ENCODE measurements at regions of chr4 and their contacts with region 1.

Region 1: GRCh38 chr4:140153718-140154571 is at the start of gene MAML3:
- DNase-seq: peak; percentile 98
- H3K4me3 ChIP-seq: peak within 1 kb of the TSS; percentile 71 to 86 (median 76)
- H3K27ac ChIP-seq: peak within 1 kb of the TSS; percentile 96 to 99 (median 98)
- H3K4me1 ChIP-seq: peaks cover 0 to 36% (median 29%) of the 10 kb centered on the region in 4 donors
- H3K27me3 ChIP-seq: no peaks in the 10 kb centered on the region
- CTCF ChIP-seq: no peak
- EP300 ChIP-seq: no peak
- POLR2A ChIP-seq: peak; percentile 61 to 84
- total RNA-seq, gene MAML3: 5.0 to 16.3 (median 7.6) TPM

Region 2: GRCh38 chr4:139301113-139301820 is 852.7 kb before region 1 on chr4 and contains the start of gene NAA15:
- intact Hi-C with region 1: loop called (anchors 10 kb)
- DNase-seq: peak; percentile 99
- H3K4me3 ChIP-seq: peak within 1 kb of the TSS; percentile 87 to 99 (median 96)
- H3K27ac ChIP-seq: peak within 1 kb of the TSS; percentile 93 to 98 (median 96)
- H3K4me1 ChIP-seq: peaks cover 0 to 60% (median 35%) of the 10 kb centered on the region in 4 donors
- H3K27me3 ChIP-seq: no peaks in the 10 kb centered on the region
- CTCF ChIP-seq: no peak
- EP300 ChIP-seq: peak in 1 of 4 donors; percentile 68
- POLR2A ChIP-seq: peak; percentile 87
- total RNA-seq, gene NAA15: 21.6 to 40.3 (median 28.9) TPM

Region 3: DNA sequence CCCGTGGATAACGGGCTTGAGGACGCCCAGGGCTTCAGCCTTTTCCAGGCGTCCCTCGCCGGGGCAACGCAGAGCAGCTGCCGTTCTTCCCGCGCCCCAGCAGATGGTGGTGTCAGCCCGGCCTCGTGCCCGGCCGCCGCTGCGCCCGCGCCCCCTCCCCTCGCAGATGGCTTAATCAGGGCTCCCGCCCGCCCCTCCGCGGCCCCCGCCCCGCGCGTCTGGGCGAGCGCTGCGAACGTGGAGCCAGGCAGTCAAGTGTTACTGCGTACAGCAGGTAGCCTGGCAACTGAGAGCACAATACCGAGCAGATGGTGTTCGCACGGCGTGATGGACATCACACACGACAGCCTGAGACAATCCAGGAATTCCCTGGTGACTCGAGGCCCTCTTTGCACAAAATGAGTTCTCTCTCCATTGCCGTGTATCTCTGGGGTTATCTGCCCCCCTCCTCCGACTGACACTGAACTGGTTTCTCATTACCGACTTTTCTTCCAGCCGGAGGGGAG is 419.0 kb before region 1 on chr4:
- intact Hi-C with region 1: loop called (anchors 2 kb)
- DNase-seq: peak; percentile 95
- H3K4me3 ChIP-seq: peak overlapping the region; percentile 23 to 58 (median 52)
- H3K27ac ChIP-seq: peak overlapping the region; percentile 81 to 90 (median 88)
- H3K4me1 ChIP-seq: peaks cover 0 to 32% (median 23%) of the 10 kb centered on the region in 4 donors
- H3K27me3 ChIP-seq: no peaks in the 10 kb centered on the region
- CTCF ChIP-seq: peak; percentile 55 to 87 (median 63)
- EP300 ChIP-seq: peak in 1 of 4 donors; percentile 31
- POLR2A ChIP-seq: no peak

Region 4: GRCh38 chr4:139919521-139919920 is 234.4 kb before region 1 on chr4:
- intact Hi-C with region 1: loop called (anchors 5 kb)
- DNase-seq: no peak
- H3K4me3 ChIP-seq: no peak overlapping the region
- H3K27ac ChIP-seq: peak overlapping the region; percentile 77 to 90 (median 81)
- H3K4me1 ChIP-seq: peaks cover 0 to 77% (median 75%) of the 10 kb centered on the region in 4 donors
- H3K27me3 ChIP-seq: no peaks in the 10 kb centered on the region
- CTCF ChIP-seq: no peak
- EP300 ChIP-seq: no peak
- POLR2A ChIP-seq: no peak

Region 5: GRCh38 chr4:139943277-139943676 is 210.7 kb before region 1 on chr4:
- intact Hi-C with region 1: no loop called
- DNase-seq: no peak
- H3K4me3 ChIP-seq: no peak overlapping the region
- H3K27ac ChIP-seq: no peak overlapping the region
- H3K4me1 ChIP-seq: peaks cover 0 to 15% (median 10%) of the 10 kb centered on the region in 4 donors
- H3K27me3 ChIP-seq: no peaks in the 10 kb centered on the region
- CTCF ChIP-seq: no peak
- EP300 ChIP-seq: no peak
- POLR2A ChIP-seq: no peak

Region 6: DNA sequence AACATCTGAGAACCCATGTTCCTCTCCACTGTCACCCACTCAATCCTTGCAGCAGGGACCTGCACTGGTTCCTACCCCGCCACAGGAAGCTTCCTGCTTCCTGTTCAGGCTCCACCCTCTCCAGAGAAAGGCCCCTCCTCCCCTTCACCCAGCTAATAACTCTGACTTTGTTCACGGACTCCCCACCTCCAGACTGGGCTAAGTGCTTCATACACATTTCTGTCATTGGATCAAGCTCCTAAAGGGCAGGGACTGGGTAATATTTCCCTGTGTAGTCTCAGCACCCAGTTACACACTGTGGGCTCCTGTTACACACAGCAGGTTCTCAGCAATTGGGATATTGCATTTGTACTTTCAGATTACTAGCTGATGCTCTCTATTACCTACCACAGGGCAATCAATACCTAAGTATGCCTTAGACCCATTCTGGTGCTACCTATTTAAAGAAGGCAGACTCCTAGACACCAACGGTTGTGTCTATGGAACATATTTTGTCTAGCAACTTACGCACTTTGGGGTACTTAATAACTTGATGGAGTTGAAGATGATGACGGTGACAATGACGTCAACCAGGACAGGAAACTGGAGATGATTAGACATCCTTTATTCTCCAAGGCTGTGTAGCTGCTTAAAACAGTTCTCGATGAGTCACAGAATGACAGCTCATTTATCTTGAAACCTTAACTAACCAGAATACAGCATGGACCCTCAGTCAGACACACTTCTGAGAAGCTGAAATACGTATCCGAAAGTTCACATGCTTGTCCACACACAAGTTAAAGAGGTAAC is 58.1 kb before region 1 on chr4:
- intact Hi-C with region 1: loop called (anchors 5 kb)
- DNase-seq: peak; percentile 68
- H3K4me3 ChIP-seq: peak overlapping the region in 1 of 4 donors; percentile 0
- H3K27ac ChIP-seq: peak overlapping the region; percentile 43 to 64 (median 46)
- H3K4me1 ChIP-seq: peaks cover 0 to 57% (median 42%) of the 10 kb centered on the region in 4 donors
- H3K27me3 ChIP-seq: no peaks in the 10 kb centered on the region
- CTCF ChIP-seq: no peak
- EP300 ChIP-seq: no peak
- POLR2A ChIP-seq: no peak

Region 7: DNA sequence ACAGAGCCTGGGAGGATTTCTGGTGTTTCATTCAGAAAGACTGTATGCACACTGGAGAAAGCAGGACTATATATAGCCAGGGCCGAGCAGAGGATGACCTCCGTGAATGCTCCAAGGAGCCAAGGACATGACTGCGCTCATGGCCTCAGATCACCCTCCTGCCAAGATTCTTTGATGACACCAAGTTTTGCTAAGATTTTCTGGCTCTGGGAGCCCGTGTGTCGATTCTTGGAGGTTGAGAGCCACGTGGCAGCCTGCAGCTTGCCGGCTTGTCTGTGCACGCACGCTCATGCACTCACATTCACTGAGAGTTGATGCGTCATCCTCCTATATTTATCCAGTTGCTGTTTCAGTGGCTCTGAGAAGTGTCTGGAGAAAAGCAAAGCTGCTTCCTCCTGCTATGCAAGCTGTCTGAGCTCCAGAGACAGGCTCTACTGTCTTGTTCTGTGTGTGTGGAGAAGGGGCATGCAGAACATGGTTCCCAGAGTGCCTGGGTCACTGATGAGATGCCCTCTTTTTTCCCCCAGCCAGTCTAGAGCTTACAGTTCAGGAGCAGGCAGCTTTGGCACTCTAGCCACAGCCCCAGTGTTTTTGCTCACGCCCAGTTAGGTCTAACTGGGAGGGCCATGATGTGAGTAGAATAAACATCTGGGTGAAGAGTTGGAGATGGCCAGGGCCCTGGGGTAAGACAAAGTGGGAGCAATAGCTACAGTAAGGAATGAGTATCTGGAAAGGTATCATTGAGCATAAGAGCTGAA is 154.6 kb after region 1 on chr4:
- intact Hi-C with region 1: loop called (anchors 5 kb)
- DNase-seq: peak; percentile 84
- H3K4me3 ChIP-seq: no peak overlapping the region
- H3K27ac ChIP-seq: peak overlapping the region; percentile 70 to 87 (median 74)
- H3K4me1 ChIP-seq: peaks cover 0 to 18% (median 15%) of the 10 kb centered on the region in 4 donors
- H3K27me3 ChIP-seq: no peaks in the 10 kb centered on the region
- CTCF ChIP-seq: no peak
- EP300 ChIP-seq: peak in 3 of 4 donors; percentile 36 to 94 (median 42)
- POLR2A ChIP-seq: no peak

Measured in sigmoid colon (tissue), 7 donors.